ENCODE measurements at regions of chr12 and their contacts with region 1.

Region 1: DNA sequence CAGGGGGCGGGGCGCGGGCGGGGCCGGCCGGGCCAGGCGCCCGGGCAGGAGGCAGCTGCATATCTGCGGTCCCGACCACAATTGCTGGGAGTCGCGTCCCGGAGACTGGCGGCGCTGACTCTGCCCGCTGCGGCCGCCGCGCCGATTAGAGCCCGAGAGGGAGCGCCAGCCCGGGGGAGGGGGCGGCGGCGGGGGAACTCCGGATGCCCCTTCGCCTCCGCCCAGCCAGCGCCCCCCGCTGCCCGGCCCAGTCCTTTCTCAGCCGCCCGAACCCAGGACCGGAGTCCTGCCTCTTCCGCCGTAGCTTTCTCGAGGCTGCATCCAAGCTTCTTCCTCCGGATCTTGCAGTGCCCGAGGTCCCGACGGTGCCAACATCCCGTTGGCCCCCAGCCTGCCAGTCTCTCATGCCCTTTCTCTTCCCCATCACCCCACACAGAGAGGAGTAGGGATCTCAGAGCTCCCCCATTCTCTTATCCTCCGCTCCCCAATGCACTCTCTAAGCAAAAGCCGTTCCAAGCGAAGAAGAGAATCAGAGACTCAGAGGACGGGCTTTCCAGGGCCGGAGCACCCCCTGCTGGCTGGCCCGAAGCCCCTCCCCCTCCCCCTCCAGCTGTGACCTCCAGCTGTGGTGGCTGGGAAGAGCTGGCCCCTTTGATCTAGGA is 8.8 kb upstream of the SP7 start:
- DNase-seq: peak; percentile 93
- H3K4me3 ChIP-seq: peak overlapping the region; percentile 53 to 72
- H3K27ac ChIP-seq: peak overlapping the region; percentile 71 to 74
- H3K4me1 ChIP-seq: peaks cover 0 to 14% of the 10 kb centered on the region in 2 experiments; a peak in 2 of 4 replicates
- H3K27me3 ChIP-seq: no peaks in the 10 kb centered on the region
- CTCF ChIP-seq: peak; percentile 83
- EP300 ChIP-seq: peak in 1 of 2 experiments; percentile 30; a peak in 1 of 4 replicates
- RAD21 ChIP-seq: peak; percentile 73

Region 2: DNA sequence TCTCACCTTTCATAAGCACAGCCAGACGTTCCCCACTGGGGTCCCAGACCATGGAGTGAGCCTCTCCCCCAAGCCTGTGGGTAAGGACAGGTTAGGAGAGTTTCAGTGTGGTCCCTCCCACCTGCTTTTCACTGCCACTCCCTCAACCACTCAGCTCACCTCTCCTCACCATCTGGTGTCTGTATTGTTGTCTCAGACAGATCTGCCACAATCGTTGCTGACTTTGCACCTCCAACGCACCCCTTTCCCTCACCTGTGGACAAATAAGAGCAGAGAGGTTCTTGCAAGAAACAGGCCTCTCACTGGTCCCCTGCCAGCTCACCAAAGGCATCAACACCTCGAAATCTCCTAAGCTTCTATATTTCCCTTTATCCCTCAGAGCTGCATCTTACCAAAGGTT is 36.7 kb before region 1 on chr12:
- CTCF ChIA-PET with region 1: interaction called, 12 read pairs
- POLR2A ChIA-PET with region 1: interaction called, 3 read pairs
- DNase-seq: no peak
- H3K4me3 ChIP-seq: no peak overlapping the region
- H3K27ac ChIP-seq: no peak overlapping the region
- H3K4me1 ChIP-seq: no peaks in the 10 kb centered on the region; a peak in 1 of 4 replicates
- H3K27me3 ChIP-seq: no peaks in the 10 kb centered on the region
- CTCF ChIP-seq: no peak
- EP300 ChIP-seq: no peak
- RAD21 ChIP-seq: no peak

Region 3: GRCh38 chr12:53414756-53415417 is 69.9 kb after region 1 on chr12:
- CTCF ChIA-PET with region 1: interaction called, 83 read pairs
- POLR2A ChIA-PET with region 1: interaction called, 3 read pairs
- DNase-seq: peak; percentile 58
- H3K4me3 ChIP-seq: no peak overlapping the region
- H3K27ac ChIP-seq: peak overlapping the region; percentile 73 to 99
- H3K4me1 ChIP-seq: peaks cover 45 to 47% of the 10 kb centered on the region in 2 experiments
- H3K27me3 ChIP-seq: no peaks in the 10 kb centered on the region
- CTCF ChIP-seq: no peak
- EP300 ChIP-seq: peak in 1 of 2 experiments; percentile 77; a peak in 2 of 4 replicates
- RAD21 ChIP-seq: no peak

Region 4: DNA sequence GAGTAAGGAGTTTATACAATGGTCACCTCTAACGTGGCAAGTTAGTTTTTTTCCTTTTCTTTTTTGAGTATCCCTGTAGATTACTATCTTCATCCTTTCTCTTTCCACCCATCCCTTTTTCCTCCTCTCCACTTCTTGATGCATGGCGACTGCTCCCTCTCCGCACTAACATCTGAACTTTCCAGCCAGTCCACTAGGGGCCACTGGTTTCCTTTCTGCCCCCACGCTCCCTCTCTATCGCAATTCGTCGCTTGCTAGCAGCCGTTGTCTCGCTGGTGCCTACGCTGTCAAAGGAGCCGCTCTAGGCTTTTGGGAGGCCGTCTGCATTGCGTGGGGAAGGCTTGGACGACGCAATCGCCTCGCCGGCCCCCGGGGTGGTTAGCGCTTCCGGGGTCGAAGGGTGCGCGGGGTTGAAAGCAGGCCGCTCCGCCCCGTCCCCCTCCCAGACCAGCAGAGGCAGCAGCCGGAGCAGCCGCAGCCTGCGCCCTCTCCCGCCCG is 106.8 kb after region 1 on chr12 and contains the start of gene PCBP2:
- CTCF ChIA-PET with region 1: interaction called, 13 read pairs
- POLR2A ChIA-PET with region 1: interaction called, 7 read pairs
- DNase-seq: peak; percentile 96
- H3K4me3 ChIP-seq: peak within 1 kb of the TSS; percentile 68 to 83
- H3K27ac ChIP-seq: peak within 1 kb of the TSS; percentile 95 to 96
- H3K4me1 ChIP-seq: peaks cover 10 to 13% of the 10 kb centered on the region in 2 experiments; a peak in 3 of 4 replicates
- H3K27me3 ChIP-seq: no peaks in the 10 kb centered on the region
- CTCF ChIP-seq: peak; percentile 85
- EP300 ChIP-seq: 0 out of 4 replicates have a peak, but pooled peaks have one; percentile 4 to 17
- RAD21 ChIP-seq: no peak
- polyA plus RNA-seq, gene PCBP2: 336 and 368 TPM in 2 replicates

Region 5: DNA sequence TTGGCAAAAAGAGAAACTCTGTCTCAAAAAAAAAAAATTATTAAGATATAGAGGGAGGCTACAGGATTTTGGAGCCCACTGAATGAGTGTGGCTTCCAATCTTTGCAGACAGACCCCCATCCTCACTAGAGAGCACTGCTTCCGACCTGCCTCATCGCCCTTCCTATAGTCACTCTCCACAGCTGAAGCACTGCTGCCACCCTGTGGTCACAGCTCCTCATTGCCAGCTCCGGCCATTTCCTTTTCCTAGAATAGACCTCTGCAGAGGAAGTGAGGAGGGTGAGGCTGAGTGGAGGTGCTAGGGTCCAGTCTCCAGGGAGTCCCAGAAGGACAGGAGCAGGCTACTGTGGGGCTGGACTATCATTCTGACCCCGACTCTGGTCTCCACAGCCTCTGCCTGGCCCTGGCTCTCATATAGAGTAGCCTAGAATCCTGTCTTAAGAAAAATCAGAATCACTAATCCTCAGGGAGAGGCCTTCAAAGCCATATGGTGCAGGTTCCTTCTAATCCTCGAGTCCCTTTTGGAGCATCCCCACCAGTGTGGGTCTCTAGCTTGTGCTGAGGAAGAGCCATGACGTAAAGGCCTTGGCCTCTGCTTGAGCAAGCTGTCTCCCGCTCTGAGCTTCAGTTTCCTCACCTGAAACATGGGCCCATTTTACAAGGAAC is 163.7 kb after region 1 on chr12:
- CTCF ChIA-PET with region 1: interaction called, 12 read pairs
- POLR2A ChIA-PET with region 1: no interaction called
- DNase-seq: peak; percentile 84
- H3K4me3 ChIP-seq: peak overlapping the region in 1 of 2 experiments; percentile 21; a peak in 1 of 4 replicates
- H3K27ac ChIP-seq: peak overlapping the region in 1 of 2 experiments; percentile 31; a peak in 1 of 4 replicates
- H3K4me1 ChIP-seq: peaks cover 0 to 12% of the 10 kb centered on the region in 2 experiments; a peak in 3 of 4 replicates
- H3K27me3 ChIP-seq: no peaks in the 10 kb centered on the region
- CTCF ChIP-seq: peak; percentile 93
- EP300 ChIP-seq: no peak
- RAD21 ChIP-seq: peak; percentile 97

Measured in SK-N-SH (cell line).